ENCODE measurements at regions of chr14 and their contacts with region 1.

Region 1: GRCh38 chr14:76876076-76876475 is 49.9 kb downstream of the LRRC74A start:
- DNase-seq: peak; percentile 78 to 87
- H3K4me3 ChIP-seq: no peak overlapping the region
- H3K27ac ChIP-seq: no peak overlapping the region
- H3K4me1 ChIP-seq: no peaks in the 10 kb centered on the region
- H3K27me3 ChIP-seq: peaks cover 7% of the 10 kb centered on the region
- CTCF ChIP-seq: peak; percentile 100

Region 2: DNA sequence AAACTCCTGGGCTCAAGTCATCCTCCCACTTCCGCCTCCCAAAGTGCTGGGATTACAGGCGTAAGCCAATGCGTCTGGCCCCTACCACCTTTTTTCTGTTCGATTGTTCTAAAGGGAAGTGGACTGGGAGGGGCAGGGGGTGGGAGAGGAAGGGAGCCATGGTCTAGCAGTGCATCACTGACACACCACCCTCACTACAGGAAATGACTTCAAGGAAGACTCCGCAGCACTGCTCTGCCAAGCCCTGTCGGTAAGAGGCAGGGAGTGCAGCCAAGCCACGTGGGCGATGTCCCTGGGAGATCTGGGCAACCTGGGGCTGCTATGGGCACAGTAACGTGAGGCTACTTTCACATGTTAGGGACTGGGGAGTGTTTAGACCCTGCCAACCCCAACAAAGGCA is 31.9 kb before region 1 on chr14:
- CTCF ChIA-PET with region 1: no interaction called
- POLR2A ChIA-PET with region 1: no interaction called
- intact Hi-C with region 1: no loop called
- DNase-seq: peak in 1 of 2 experiments; percentile 19
- H3K4me3 ChIP-seq: no peak overlapping the region
- H3K27ac ChIP-seq: no peak overlapping the region
- H3K4me1 ChIP-seq: no peaks in the 10 kb centered on the region
- H3K27me3 ChIP-seq: peaks cover 80% of the 10 kb centered on the region
- CTCF ChIP-seq: no peak

Region 3: DNA sequence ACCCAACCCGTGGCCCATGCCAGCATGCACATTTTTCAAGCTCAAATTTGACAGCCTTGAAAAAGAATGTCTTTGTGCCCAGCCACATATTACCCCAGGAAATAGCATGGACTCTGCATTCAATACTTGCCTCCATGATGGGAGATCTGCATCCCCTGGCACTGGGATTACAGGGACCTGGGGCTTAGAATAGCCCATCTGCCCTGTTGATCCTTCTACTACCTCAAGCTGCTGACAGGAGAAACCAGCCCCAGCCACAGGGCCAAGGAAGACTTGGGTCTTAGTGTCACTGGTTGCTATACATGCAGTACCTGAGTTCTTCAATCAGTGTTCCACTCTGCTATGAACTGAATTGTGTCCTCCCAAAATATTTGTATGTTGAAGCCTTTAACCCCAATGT is 35.4 kb after region 1 on chr14:
- CTCF ChIA-PET with region 1: interaction called, 19 read pairs
- POLR2A ChIA-PET with region 1: no interaction called
- intact Hi-C with region 1: loop called (anchors 1 kb)
- DNase-seq: no peak
- H3K4me3 ChIP-seq: no peak overlapping the region
- H3K27ac ChIP-seq: no peak overlapping the region
- H3K4me1 ChIP-seq: peaks cover 42% of the 10 kb centered on the region
- H3K27me3 ChIP-seq: no peaks in the 10 kb centered on the region
- CTCF ChIP-seq: no peak

Region 4: GRCh38 chr14:77086017-77086736 is 210.1 kb after region 1 on chr14:
- CTCF ChIA-PET with region 1: interaction called, 13 read pairs
- POLR2A ChIA-PET with region 1: interaction called, 4 read pairs
- intact Hi-C with region 1: no loop called
- DNase-seq: peak; percentile 58 to 86
- H3K4me3 ChIP-seq: no peak overlapping the region
- H3K27ac ChIP-seq: no peak overlapping the region
- H3K4me1 ChIP-seq: peaks cover 38% of the 10 kb centered on the region
- H3K27me3 ChIP-seq: no peaks in the 10 kb centered on the region
- CTCF ChIP-seq: no peak

Region 5: GRCh38 chr14:77158175-77158891 is 282.3 kb after region 1 on chr14:
- CTCF ChIA-PET with region 1: interaction called, 5 read pairs
- POLR2A ChIA-PET with region 1: interaction called, 11 read pairs
- intact Hi-C with region 1: no loop called
- DNase-seq: peak in 1 of 2 experiments; percentile 69
- H3K4me3 ChIP-seq: no peak overlapping the region
- H3K27ac ChIP-seq: no peak overlapping the region
- H3K4me1 ChIP-seq: no peaks in the 10 kb centered on the region
- H3K27me3 ChIP-seq: peaks cover 73% of the 10 kb centered on the region
- CTCF ChIP-seq: no peak

Region 6: GRCh38 chr14:77314043-77314442 is 438.0 kb after region 1 on chr14:
- CTCF ChIA-PET with region 1: interaction called, 8 read pairs
- POLR2A ChIA-PET with region 1: no interaction called
- intact Hi-C with region 1: loop called (anchors 1 kb)
- DNase-seq: peak in 1 of 2 experiments; percentile 83
- H3K4me3 ChIP-seq: no peak overlapping the region
- H3K27ac ChIP-seq: no peak overlapping the region
- H3K4me1 ChIP-seq: peaks cover 1% of the 10 kb centered on the region; the same call in 1 of the 2 replicates
- H3K27me3 ChIP-seq: no peaks in the 10 kb centered on the region
- CTCF ChIP-seq: 0 out of 2 replicates have a peak, but pooled peaks have one; percentile 9

Region 7: DNA sequence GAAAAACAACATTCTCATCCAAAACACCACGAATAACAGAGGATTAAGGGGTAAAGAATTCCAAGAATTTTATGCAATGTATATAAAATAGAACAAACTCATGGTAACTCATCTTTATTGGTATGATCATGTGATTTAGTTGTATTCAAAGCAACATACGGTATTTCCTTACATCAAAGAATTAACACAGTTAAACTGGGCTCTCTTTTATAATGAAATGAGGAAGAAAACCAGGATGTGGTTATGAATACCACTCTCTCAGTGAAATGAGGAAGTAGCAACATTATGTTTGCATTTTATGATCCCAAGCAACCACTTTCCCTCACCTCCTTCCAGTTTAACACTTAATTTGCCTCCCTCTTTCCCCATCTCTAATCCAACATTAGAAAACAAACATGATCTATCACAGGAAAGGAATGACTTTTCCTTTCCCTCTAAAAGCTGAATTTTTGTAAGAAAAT is 717.5 kb after region 1 on chr14:
- CTCF ChIA-PET with region 1: interaction called, 13 read pairs
- POLR2A ChIA-PET with region 1: no interaction called
- intact Hi-C with region 1: no loop called
- DNase-seq: peak in 1 of 2 experiments; percentile 99
- H3K4me3 ChIP-seq: peak overlapping the region; percentile 5; the same call in 1 of the 2 replicates
- H3K27ac ChIP-seq: peak overlapping the region; percentile 77
- H3K4me1 ChIP-seq: peaks cover 53% of the 10 kb centered on the region
- H3K27me3 ChIP-seq: no peaks in the 10 kb centered on the region
- CTCF ChIP-seq: no peak